Activated CD8-positive, alpha-beta T cell treated with anti-CD3 and anti-CD28 coated beads, Interleukin-2, amount 10 ng/mL, durations not matched to agents 7 days and 5 days (primary cell): ENCODE measurements at regions of chr20 and their contacts with region 1.

Region 1: GRCh38 chr20:4813863-4814695 is 92.4 kb downstream of the PRND start:
- DNase-seq: peak; percentile 81
- ATAC-seq: peak; percentile 74
- H3K4me3 Mint-ChIP-seq: peak overlapping the region; percentile 94
- H3K27ac Mint-ChIP-seq: peak overlapping the region; percentile 98
- H3K4me1 Mint-ChIP-seq: peaks cover 76% of the 10 kb centered on the region
- H3K27me3 Mint-ChIP-seq: no peaks in the 10 kb centered on the region

Region 2: DNA sequence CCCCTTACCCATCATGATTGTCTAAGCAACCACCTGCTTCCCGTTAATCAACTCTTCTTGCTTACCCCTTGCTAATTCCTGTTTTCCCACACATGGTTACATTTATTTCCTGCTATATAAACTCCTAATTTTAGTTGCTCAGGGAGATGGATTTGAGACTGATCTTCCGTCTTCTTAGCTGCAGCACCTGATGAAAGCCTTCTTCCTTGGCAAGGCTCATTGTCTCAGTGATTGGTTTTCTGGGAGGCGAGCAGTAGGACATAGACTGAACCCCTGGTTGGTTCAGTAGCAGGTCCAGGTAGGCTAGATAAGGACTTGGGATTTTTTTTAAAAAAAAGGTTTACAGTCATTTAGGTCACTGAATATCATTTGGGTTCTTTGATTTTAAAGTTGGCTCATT is 41.9 kb before region 1 on chr20:
- CTCF ChIA-PET with region 1: no interaction called
- POLR2A ChIA-PET with region 1: no interaction called
- DNase-seq: no peak
- ATAC-seq: no peak
- H3K4me3 Mint-ChIP-seq: no peak overlapping the region
- H3K27ac Mint-ChIP-seq: no peak overlapping the region
- H3K4me1 Mint-ChIP-seq: no peaks in the 10 kb centered on the region
- H3K27me3 Mint-ChIP-seq: peaks cover 14% of the 10 kb centered on the region

Region 3: DNA sequence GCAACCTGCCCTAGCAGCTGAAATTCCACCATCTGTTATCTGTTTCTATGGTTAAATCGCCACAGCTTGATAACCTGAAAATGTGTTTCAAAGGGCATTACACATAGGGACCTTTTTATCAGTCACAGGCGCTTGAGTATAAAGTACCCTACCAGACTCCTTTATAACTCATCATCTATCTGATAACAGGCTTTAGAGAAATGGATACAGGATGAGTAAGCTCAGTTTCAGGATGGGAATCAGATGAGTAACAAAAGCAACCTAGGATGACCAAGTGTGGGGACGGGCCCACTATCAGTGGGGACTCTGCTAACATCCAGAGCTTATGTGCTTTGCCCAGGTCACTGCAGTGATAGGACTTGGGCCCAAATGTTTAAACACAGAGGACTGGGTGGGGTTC is 16.8 kb before region 1 on chr20:
- CTCF ChIA-PET with region 1: interaction called, 3 read pairs
- POLR2A ChIA-PET with region 1: interaction called, 10 read pairs
- DNase-seq: no peak
- ATAC-seq: no peak
- H3K4me3 Mint-ChIP-seq: no peak overlapping the region
- H3K27ac Mint-ChIP-seq: no peak overlapping the region
- H3K4me1 Mint-ChIP-seq: peaks cover 24% of the 10 kb centered on the region
- H3K27me3 Mint-ChIP-seq: no peaks in the 10 kb centered on the region

Region 4: GRCh38 chr20:4848041-4848440 is 34.0 kb after region 1 on chr20:
- CTCF ChIA-PET with region 1: no interaction called
- POLR2A ChIA-PET with region 1: no interaction called
- DNase-seq: no peak
- ATAC-seq: no peak
- H3K4me3 Mint-ChIP-seq: no peak overlapping the region
- H3K27ac Mint-ChIP-seq: no peak overlapping the region
- H3K4me1 Mint-ChIP-seq: peaks cover 4% of the 10 kb centered on the region
- H3K27me3 Mint-ChIP-seq: peaks cover 7% of the 10 kb centered on the region

Region 5: GRCh38 chr20:5008759-5009158 is 194.7 kb after region 1 on chr20:
- CTCF ChIA-PET with region 1: no interaction called
- POLR2A ChIA-PET with region 1: no interaction called
- DNase-seq: no peak
- ATAC-seq: no peak
- H3K4me3 Mint-ChIP-seq: no peak overlapping the region
- H3K27ac Mint-ChIP-seq: peak overlapping the region; percentile 9
- H3K4me1 Mint-ChIP-seq: peaks cover 18% of the 10 kb centered on the region
- H3K27me3 Mint-ChIP-seq: peaks cover 12% of the 10 kb centered on the region

Region 6: DNA sequence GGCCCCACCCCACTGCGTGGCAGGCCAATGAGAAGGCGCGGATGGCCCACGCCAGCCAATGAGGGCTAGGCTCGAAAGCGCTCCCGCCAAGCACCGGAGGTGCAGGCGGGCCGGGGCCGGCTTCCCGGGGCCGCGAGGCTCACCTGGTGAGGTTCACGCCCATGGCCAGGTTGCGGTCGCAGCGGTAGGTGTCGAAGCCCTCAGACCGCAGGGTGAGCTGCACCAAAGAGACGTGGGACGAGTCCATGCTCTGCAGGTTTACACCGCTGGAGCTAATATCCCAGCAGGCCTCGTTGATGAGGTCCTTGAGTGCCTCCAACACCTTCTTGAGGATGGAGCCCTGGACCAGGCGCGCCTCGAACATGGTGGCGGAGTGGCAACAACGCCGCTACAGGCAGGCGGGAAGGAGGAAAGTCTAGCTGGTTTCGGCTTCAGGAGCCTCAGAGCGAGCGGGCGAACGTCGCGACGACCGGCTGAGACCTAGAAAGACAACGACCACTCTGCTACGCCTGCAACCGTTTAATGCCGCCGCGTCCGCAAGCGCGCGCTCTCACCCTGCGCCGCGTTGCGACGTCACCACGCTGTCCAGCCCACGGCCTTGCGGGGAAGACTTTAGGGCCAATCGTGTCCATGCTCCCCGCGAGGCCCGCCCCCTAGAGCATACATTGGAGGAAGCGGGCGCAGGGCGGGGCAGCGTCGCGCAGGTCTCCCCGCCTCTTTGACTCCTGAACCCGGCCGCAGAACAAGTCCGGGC is 305.5 kb after region 1 on chr20 and contains the start of gene PCNA:
- CTCF ChIA-PET with region 1: no interaction called
- POLR2A ChIA-PET with region 1: interaction called, 11 read pairs
- DNase-seq: peak; percentile 99
- ATAC-seq: peak; percentile 91
- H3K4me3 Mint-ChIP-seq: peak within 1 kb of the TSS; percentile 91
- H3K27ac Mint-ChIP-seq: peak within 1 kb of the TSS; percentile 97
- H3K4me1 Mint-ChIP-seq: peaks cover 68% of the 10 kb centered on the region
- H3K27me3 Mint-ChIP-seq: no peaks in the 10 kb centered on the region
- total RNA-seq, gene PCNA: 607 to 613 TPM